Testis (tissue), 5 donors: ENCODE measurements at regions of chr16 and their contacts with region 1.

Region 1: GRCh38 chr16:49419006-49419405 is 45.4 kb downstream of the C16orf78 start:
- DNase-seq: no peak
- H3K4me3 ChIP-seq: no peak overlapping the region
- H3K27ac ChIP-seq: no peak overlapping the region
- H3K4me1 ChIP-seq: no peaks in the 10 kb centered on the region
- H3K27me3 ChIP-seq: no peaks in the 10 kb centered on the region
- CTCF ChIP-seq: no peak
- POLR2A ChIP-seq: no peak

Region 2: DNA sequence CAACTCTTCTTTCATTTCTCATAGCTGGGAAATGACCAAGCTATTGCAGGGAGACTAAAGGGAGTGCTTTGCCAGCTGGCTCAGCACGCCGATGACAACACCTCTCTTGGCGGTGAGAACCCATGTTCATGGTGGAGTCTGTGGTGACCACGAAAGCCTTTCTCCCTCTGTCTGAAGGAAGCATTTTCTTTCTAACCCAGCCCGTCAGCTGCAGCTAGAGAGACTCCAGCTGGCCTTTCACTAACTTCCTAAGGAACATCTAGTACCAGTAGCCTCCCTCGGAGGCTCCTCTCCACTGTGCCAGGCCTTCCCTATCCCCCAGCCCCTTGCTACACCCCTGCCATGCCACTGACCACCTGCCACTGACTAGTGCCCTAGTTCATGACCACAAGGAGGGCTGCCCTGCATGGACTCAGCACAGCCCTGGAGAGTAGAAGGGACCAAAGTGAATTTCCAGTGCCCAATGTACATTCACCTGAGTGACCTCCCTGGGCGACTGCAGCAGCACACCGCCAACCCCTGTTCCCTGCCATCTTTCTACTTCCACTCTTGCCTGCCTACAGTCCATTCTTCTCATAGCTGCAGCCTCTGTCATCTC is 218.7 kb before region 1 on chr16:
- intact Hi-C with region 1: no loop called
- DNase-seq: no peak
- H3K4me3 ChIP-seq: no peak overlapping the region
- H3K27ac ChIP-seq: no peak overlapping the region
- H3K4me1 ChIP-seq: no peaks in the 10 kb centered on the region
- H3K27me3 ChIP-seq: no peaks in the 10 kb centered on the region
- CTCF ChIP-seq: no peak
- POLR2A ChIP-seq: no peak

Region 3: GRCh38 chr16:49365711-49366509 is 53.1 kb before region 1 on chr16:
- intact Hi-C with region 1: no loop called
- DNase-seq: no peak
- H3K4me3 ChIP-seq: no peak overlapping the region
- H3K27ac ChIP-seq: no peak overlapping the region
- H3K4me1 ChIP-seq: no peaks in the 10 kb centered on the region
- H3K27me3 ChIP-seq: no peaks in the 10 kb centered on the region
- CTCF ChIP-seq: no peak
- POLR2A ChIP-seq: no peak

Region 4: GRCh38 chr16:49592546-49593423 is 173.8 kb after region 1 on chr16:
- intact Hi-C with region 1: no loop called
- DNase-seq: no peak
- H3K4me3 ChIP-seq: no peak overlapping the region
- H3K27ac ChIP-seq: no peak overlapping the region
- H3K4me1 ChIP-seq: peaks cover 22% of the 10 kb centered on the region
- H3K27me3 ChIP-seq: no peaks in the 10 kb centered on the region
- CTCF ChIP-seq: peak; percentile 46 to 75 (median 53)
- POLR2A ChIP-seq: no peak

Region 5: DNA sequence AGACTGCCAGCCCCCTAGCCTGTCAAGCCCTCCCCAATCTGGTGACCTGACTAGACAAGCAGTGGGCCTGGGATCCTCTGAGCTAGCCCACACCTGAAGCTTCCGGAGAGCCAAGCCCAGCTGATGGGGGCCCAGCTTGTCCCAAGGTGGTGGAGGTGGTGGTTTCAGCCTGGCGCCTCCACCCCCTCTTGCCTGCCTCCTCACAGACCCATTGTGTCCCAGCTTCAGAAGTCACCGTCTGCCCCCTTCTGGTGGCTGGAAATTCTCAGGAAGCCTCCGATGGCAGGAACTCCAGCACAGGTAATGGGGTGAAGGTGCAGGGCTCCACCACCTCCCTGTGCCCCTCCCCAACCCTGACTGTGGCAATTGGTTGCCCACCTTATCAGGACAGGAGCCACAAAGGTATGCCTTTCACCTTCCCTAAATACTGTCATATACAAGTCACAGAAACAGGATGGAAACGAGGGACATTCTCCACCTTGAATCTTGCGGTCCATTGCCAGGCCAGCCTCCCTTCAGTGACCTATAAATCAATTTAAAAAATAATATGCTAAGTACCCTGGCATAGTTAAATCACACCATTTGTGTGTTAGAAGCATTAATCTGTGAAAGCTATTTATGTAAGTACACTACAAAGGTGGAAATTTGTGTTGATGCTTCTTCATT is 502.9 kb after region 1 on chr16:
- intact Hi-C with region 1: loop called (anchors 10 kb)
- DNase-seq: peak; percentile 82
- H3K4me3 ChIP-seq: no peak overlapping the region
- H3K27ac ChIP-seq: no peak overlapping the region
- H3K4me1 ChIP-seq: no peaks in the 10 kb centered on the region
- H3K27me3 ChIP-seq: no peaks in the 10 kb centered on the region
- CTCF ChIP-seq: peak; percentile 58 to 63 (median 60)
- POLR2A ChIP-seq: no peak